PC-3 (cell line): ENCODE measurements at regions of chr9 and their contacts with region 1.

Region 1: GRCh38 chr9:36317764-36318163 is 59.5 kb upstream of the GNE start:
- DNase-seq: peak; percentile 93
- ATAC-seq: peak; percentile 78
- H3K4me3 ChIP-seq: no peak overlapping the region
- H3K27ac ChIP-seq: peak overlapping the region; percentile 80
- H3K4me1 ChIP-seq: peaks cover 34% of the 10 kb centered on the region
- H3K27me3 ChIP-seq: no peaks in the 10 kb centered on the region
- CTCF ChIP-seq: no peak

Region 2: GRCh38 chr9:36298586-36298985 is 19.2 kb before region 1 on chr9:
- CTCF ChIA-PET with region 1: no interaction called
- POLR2A ChIA-PET with region 1: no interaction called
- intact Hi-C with region 1: loop called (anchors 1 kb)
- DNase-seq: no peak
- ATAC-seq: no peak
- H3K4me3 ChIP-seq: no peak overlapping the region
- H3K27ac ChIP-seq: no peak overlapping the region
- H3K4me1 ChIP-seq: peaks cover 12% of the 10 kb centered on the region
- H3K27me3 ChIP-seq: no peaks in the 10 kb centered on the region
- CTCF ChIP-seq: no peak

Region 3: DNA sequence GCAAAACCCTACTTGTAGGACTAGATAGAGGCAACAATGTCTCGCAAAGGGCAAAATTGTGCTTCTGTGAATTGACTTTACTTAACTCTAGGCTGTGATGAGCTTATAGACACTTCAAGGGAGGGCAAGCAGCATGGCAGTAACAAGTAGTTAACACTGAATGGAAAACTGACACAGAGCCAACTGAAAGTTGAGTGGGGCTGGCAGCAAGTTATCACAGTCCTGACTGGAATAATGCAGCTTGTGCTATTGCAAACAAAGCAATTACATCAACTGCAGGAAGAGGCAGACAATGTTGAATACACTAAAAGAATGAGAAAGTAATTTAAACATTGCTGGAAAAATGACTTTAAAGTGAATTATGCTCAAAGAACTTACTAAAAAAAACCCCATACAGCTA is 20.1 kb after region 1 on chr9:
- CTCF ChIA-PET with region 1: no interaction called
- POLR2A ChIA-PET with region 1: no interaction called
- intact Hi-C with region 1: no loop called
- DNase-seq: no peak
- ATAC-seq: no peak
- H3K4me3 ChIP-seq: no peak overlapping the region
- H3K27ac ChIP-seq: no peak overlapping the region
- H3K4me1 ChIP-seq: no peaks in the 10 kb centered on the region
- H3K27me3 ChIP-seq: no peaks in the 10 kb centered on the region
- CTCF ChIP-seq: no peak

Region 4: GRCh38 chr9:36543916-36544315 is 226.2 kb after region 1 on chr9:
- CTCF ChIA-PET with region 1: no interaction called
- POLR2A ChIA-PET with region 1: no interaction called
- intact Hi-C with region 1: no loop called
- DNase-seq: no peak
- ATAC-seq: no peak
- H3K4me3 ChIP-seq: no peak overlapping the region
- H3K27ac ChIP-seq: no peak overlapping the region
- H3K4me1 ChIP-seq: no peaks in the 10 kb centered on the region
- H3K27me3 ChIP-seq: no peaks in the 10 kb centered on the region
- CTCF ChIP-seq: no peak